ENCODE measurements at regions of chr6 and their contacts with region 1.

Region 1: DNA sequence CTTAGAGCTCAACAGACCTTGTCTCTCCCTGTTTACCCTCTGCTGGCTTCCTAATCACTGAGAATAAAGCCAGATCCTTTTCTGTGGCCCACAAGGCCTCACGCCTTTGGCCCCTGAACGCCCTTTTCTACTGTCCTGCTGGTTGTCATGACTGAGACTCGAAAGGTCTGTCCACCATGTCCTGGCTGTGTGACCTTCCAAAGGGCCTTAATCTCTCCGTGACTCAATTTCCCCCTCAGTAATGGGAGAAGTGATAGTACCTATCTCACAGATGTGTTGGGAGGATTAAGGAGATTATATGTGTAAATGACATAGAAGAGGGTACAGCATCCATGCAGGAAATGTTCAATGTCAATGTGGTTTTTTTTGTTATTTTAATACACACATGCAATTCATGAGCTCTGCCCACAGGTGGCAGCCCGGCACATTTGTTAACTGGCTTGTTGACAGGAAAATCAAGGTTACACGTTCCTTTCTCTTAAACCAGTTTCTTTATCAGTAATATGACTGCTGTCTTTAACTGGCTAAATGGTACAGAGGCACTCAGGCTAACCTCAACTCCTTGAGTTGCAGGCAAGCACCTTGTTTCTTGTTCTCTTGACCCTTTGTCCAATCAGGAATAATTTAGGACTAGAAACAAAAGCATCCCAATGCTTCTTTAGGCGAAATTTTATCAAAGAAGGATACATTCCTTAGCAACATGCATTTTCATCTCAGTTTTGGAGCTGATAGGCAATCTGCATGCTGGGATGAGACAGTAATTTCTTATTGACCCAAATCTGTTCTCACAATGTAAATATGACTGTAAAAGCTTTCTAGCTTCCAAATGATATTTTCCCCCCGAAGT is 16.6 kb downstream of the SLC22A1 start:
- DNase-seq: peak; percentile 61
- H3K4me3 ChIP-seq: no peak overlapping the region
- H3K27ac ChIP-seq: peak overlapping the region; percentile 88 to 91
- H3K4me1 ChIP-seq: peaks cover 33% of the 10 kb centered on the region
- H3K27me3 ChIP-seq: no peaks in the 10 kb centered on the region
- CTCF ChIP-seq: peak; percentile 64 to 92 (median 80)
- POLR2A ChIP-seq: no peak

Region 2: GRCh38 chr6:159941286-159942113 is 196.7 kb before region 1 on chr6:
- intact Hi-C with region 1: no loop called
- DNase-seq: no peak
- H3K4me3 ChIP-seq: no peak overlapping the region
- H3K27ac ChIP-seq: no peak overlapping the region
- H3K4me1 ChIP-seq: no peaks in the 10 kb centered on the region
- H3K27me3 ChIP-seq: no peaks in the 10 kb centered on the region
- CTCF ChIP-seq: peak in 2 of 4 experiments; percentile 40 to 43
- POLR2A ChIP-seq: no peak

Region 3: DNA sequence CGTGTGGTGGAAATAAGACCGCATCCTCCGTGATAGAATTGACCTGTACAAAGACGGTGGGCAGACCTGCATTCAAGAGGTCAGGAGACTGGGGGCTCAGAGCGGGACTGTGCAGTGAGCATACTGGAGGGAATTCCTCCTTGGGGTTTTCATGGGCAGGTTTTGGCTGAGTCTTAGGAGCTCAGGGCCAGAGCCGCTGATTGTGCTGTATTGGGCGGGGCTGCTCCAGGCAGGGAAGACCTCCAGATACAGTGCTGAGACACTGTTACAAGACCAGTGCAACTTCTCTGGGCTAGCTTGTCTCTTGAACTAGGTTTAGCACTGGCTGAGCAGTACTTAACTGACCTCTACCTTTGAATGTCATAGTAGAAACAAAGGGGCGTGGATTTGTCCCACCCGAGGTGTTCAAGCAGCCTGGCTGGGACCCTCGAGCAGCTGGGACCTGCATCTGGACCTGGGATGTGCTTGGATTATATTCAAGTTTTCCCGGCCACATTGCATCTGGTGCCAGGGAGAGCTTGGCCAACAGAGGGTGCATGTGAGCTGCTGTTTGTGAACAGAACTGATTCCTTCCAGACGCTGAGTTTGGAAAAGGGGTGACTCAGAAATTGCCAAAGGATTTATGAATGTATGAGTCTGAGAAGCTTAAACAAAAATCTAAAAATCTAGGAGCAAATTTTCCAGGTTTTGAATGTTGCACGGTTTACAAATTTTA is 50.0 kb before region 1 on chr6:
- intact Hi-C with region 1: loop called (anchors 2 kb)
- DNase-seq: peak; percentile 65
- H3K4me3 ChIP-seq: no peak overlapping the region
- H3K27ac ChIP-seq: peak overlapping the region in 1 of 2 donors; percentile 4
- H3K4me1 ChIP-seq: no peaks in the 10 kb centered on the region
- H3K27me3 ChIP-seq: no peaks in the 10 kb centered on the region
- CTCF ChIP-seq: peak; percentile 50 to 76 (median 64)
- POLR2A ChIP-seq: no peak

Region 4: DNA sequence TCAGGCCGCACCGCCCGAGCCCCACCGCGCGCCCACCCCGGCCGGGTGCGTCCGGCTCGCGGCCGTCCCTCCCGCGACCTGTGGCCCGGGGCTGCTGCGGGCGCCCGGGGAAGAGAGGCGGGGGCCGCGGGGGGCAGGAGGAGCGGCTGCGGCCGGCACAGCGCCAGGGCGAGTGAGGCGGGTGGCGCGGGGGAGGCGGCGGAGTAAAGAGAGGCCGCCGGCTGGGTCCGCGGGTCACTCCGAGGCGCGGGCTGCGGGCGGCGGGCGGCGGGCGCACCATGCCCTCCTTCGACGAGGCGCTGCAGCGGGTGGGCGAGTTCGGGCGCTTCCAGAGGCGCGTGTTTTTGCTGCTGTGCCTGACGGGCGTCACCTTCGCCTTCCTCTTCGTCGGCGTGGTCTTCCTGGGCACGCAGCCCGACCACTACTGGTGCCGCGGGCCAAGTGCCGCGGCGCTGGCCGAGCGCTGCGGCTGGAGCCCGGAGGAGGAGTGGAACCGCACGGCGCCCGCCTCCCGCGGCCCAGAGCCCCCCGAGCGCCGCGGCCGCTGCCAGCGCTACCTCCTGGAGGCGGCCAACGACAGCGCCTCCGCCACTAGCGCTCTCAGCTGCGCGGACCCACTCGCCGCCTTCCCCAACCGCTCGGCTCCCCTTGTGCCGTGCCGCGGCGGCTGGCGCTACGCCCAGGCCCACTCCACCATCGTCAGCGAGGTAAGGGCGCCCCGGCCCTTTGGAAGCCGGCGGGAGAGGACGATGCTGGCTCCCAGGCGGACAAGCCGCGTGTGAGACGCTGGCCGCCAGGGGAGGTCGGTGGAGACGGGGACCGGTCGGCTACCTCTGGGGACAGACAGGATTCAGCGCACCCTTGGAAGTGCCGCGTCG is 210.2 kb after region 1 on chr6 and contains the start of gene SLC22A3:
- intact Hi-C with region 1: loop called (anchors 5 kb)
- DNase-seq: peak; percentile 40
- H3K4me3 ChIP-seq: peak within 1 kb of the TSS; percentile 63 to 79
- H3K27ac ChIP-seq: peak within 1 kb of the TSS; percentile 83 to 89
- H3K4me1 ChIP-seq: no peaks in the 10 kb centered on the region
- H3K27me3 ChIP-seq: no peaks in the 10 kb centered on the region
- CTCF ChIP-seq: peak in 2 of 4 experiments; percentile 45 to 49
- POLR2A ChIP-seq: no peak
- total RNA-seq, gene SLC22A3: 50.2 to 118 TPM

Region 5: DNA sequence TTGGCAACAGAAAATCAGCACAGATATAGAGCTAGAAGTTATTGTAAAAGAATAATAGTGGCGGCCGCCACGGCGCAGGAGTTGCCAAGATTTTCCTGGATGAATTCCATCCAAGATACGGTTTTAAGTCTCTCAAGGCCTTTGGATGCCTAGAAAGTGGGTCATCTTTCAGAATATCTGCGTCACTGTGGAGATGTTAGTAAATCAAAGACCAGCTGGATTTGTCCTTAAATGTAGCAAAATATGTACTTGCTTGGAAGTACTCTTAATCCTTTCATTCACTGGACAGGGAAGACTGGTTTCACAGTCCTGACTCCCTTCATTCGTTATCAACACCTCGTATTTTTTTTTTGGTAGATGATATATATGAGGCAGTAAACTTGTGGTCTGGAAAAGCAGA is 293.0 kb after region 1 on chr6:
- intact Hi-C with region 1: loop called (anchors 5 kb)
- DNase-seq: no peak
- H3K4me3 ChIP-seq: no peak overlapping the region
- H3K27ac ChIP-seq: peak overlapping the region; percentile 49
- H3K4me1 ChIP-seq: peaks cover 7% of the 10 kb centered on the region
- H3K27me3 ChIP-seq: no peaks in the 10 kb centered on the region
- CTCF ChIP-seq: no peak
- POLR2A ChIP-seq: no peak

Region 6: GRCh38 chr6:160455541-160456213 is 317.5 kb after region 1 on chr6:
- intact Hi-C with region 1: loop called (anchors 1 kb)
- DNase-seq: peak; percentile 61
- H3K4me3 ChIP-seq: no peak overlapping the region
- H3K27ac ChIP-seq: peak overlapping the region; percentile 52 to 63
- H3K4me1 ChIP-seq: no peaks in the 10 kb centered on the region
- H3K27me3 ChIP-seq: no peaks in the 10 kb centered on the region
- CTCF ChIP-seq: peak; percentile 90 to 98 (median 97)
- POLR2A ChIP-seq: no peak

Measured in prostate gland (tissue), 2 donors.